ENCODE measurements at regions of chr15 and their contacts with region 1.

Region 1: GRCh38 chr15:76678766-76679165 is 226.4 kb downstream of the SCAPER start:
- DNase-seq: no peak
- ATAC-seq: no peak
- H3K4me3 ChIP-seq: no peak overlapping the region
- H3K27ac ChIP-seq: no peak overlapping the region
- H3K4me1 ChIP-seq: no peaks in the 10 kb centered on the region
- H3K27me3 ChIP-seq: peaks cover 0 to 4% of the 10 kb centered on the region in 2 experiments; a peak in 1 of 5 replicates
- CTCF ChIP-seq: no peak
- EP300 ChIP-seq: no peak
- POLR2A ChIP-seq: no peak
- RAD21 ChIP-seq: no peak

Region 2: DNA sequence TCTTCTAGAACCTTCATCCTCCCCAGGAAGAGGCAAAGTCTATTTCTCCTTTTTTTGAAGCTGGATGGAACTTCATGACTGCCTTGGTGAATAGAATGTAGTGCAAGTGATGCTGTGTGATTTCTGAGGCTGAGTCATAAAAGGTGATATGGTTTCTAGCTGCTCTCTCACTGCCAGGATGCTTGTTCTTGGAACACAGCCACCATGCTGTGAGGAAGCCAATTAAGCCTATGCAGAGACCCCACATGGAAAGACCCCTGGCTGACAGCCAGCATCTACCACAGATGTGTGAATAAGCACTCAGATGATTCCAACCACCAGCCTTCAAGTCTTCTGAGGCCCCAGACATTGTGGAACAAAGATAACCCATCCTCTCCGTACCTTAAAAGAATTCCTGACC is 285.2 kb before region 1 on chr15:
- CTCF ChIA-PET with region 1: no interaction called
- POLR2A ChIA-PET with region 1: no interaction called
- in situ Hi-C with region 1: loop called (anchors 10 kb)
- intact Hi-C with region 1: no loop called
- DNase-seq: no peak
- ATAC-seq: no peak
- H3K4me3 ChIP-seq: no peak overlapping the region
- H3K27ac ChIP-seq: no peak overlapping the region
- H3K4me1 ChIP-seq: no peaks in the 10 kb centered on the region
- H3K27me3 ChIP-seq: peaks cover 6 to 8% of the 10 kb centered on the region in 2 experiments; a peak in 4 of 5 replicates
- CTCF ChIP-seq: no peak
- EP300 ChIP-seq: no peak
- POLR2A ChIP-seq: no peak
- RAD21 ChIP-seq: no peak

Region 3: DNA sequence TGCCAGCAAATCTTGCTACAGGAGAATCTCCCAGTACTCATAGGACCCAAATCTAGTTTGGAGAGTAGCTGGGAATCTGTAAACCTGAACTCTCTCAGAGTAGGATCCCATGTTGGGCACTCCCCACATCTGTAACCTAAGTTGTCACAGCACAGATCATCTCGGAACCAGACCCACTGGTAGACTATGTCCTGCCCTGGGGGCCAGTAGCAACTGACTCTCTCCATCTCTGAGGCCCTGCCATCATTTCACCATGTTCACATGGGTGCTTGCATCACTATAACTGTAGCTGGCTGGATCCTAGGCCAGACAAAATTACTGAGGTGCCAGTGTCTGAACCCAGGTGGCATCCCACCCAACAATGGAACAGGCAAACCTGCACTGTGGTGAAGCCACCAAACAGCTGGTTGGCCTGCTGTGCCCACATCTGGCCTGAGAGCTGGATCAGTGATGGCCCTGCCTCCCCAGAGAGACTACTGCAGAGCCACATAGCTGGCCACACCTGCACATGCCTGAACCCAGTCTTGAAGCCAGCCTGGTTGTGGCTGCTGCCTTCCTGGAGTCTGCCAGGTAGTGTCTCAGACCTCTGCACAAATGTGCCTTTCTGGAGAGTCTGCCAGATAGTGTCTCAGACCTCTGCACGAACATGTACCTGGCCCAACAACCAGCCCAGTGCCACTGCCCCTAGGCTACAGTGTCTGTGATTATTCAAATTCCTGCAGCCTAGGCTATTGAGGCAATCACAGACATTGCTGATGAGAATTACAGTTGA is 260.2 kb before region 1 on chr15:
- CTCF ChIA-PET with region 1: no interaction called
- POLR2A ChIA-PET with region 1: no interaction called
- in situ Hi-C with region 1: loop called (anchors 5 kb)
- intact Hi-C with region 1: no loop called
- DNase-seq: no peak
- ATAC-seq: no peak
- H3K4me3 ChIP-seq: no peak overlapping the region
- H3K27ac ChIP-seq: no peak overlapping the region
- H3K4me1 ChIP-seq: no peaks in the 10 kb centered on the region
- H3K27me3 ChIP-seq: no peaks in the 10 kb centered on the region
- CTCF ChIP-seq: no peak
- EP300 ChIP-seq: no peak
- POLR2A ChIP-seq: no peak
- RAD21 ChIP-seq: no peak

Region 4: GRCh38 chr15:76756381-76756780 is 77.6 kb after region 1 on chr15:
- CTCF ChIA-PET with region 1: no interaction called
- POLR2A ChIA-PET with region 1: no interaction called
- in situ Hi-C with region 1: no loop called
- intact Hi-C with region 1: no loop called
- DNase-seq: no peak
- ATAC-seq: no peak
- H3K4me3 ChIP-seq: no peak overlapping the region
- H3K27ac ChIP-seq: no peak overlapping the region
- H3K4me1 ChIP-seq: no peaks in the 10 kb centered on the region
- H3K27me3 ChIP-seq: no peaks in the 10 kb centered on the region
- CTCF ChIP-seq: no peak
- EP300 ChIP-seq: no peak
- POLR2A ChIP-seq: no peak
- RAD21 ChIP-seq: no peak

Measured in K562 (cell line).